CD4-positive, alpha-beta T cell (primary cell): ENCODE measurements at regions of chr16 and their contacts with region 1.

Region 1: GRCh38 chr16:4506450-4506849 is 30.3 kb downstream of the HMOX2 start:
- DNase-seq: peak; percentile 37 to 87 (median 48)
- ATAC-seq: peak; percentile 30
- H3K4me3 ChIP-seq: no peak overlapping the region
- H3K4me3 Mint-ChIP-seq: peak overlapping the region; percentile 82
- H3K27ac ChIP-seq: peak overlapping the region; percentile 78 to 84
- H3K27ac Mint-ChIP-seq: peak overlapping the region; percentile 97
- H3K4me1 ChIP-seq: peaks cover 72% of the 10 kb centered on the region
- H3K4me1 Mint-ChIP-seq: peaks cover 65% of the 10 kb centered on the region
- H3K27me3 ChIP-seq: no peaks in the 10 kb centered on the region
- H3K27me3 Mint-ChIP-seq: no peaks in the 10 kb centered on the region
- CTCF ChIP-seq: peak; percentile 86

Region 2: GRCh38 chr16:4200000-4200780 is 306.3 kb before region 1 on chr16:
- CTCF ChIA-PET with region 1: no interaction called
- POLR2A ChIA-PET with region 1: no interaction called
- intact Hi-C with region 1: no loop called
- DNase-seq: peak in 11 of 14 experiments; percentile 5 to 57 (median 26)
- ATAC-seq: peak; percentile 56
- H3K4me3 ChIP-seq: no peak overlapping the region
- H3K4me3 Mint-ChIP-seq: no peak overlapping the region
- H3K27ac ChIP-seq: no peak overlapping the region
- H3K27ac Mint-ChIP-seq: no peak overlapping the region
- H3K4me1 ChIP-seq: peaks cover 7% of the 10 kb centered on the region
- H3K4me1 Mint-ChIP-seq: no peaks in the 10 kb centered on the region
- H3K27me3 ChIP-seq: peaks cover 0 to 7% of the 10 kb centered on the region in 2 experiments
- H3K27me3 Mint-ChIP-seq: peaks cover 9% of the 10 kb centered on the region
- CTCF ChIP-seq: no peak

Region 3: GRCh38 chr16:4443271-4443670 is 63.2 kb before region 1 on chr16:
- CTCF ChIA-PET with region 1: no interaction called
- POLR2A ChIA-PET with region 1: no interaction called
- intact Hi-C with region 1: no loop called
- DNase-seq: no peak
- ATAC-seq: no peak
- H3K4me3 ChIP-seq: no peak overlapping the region
- H3K4me3 Mint-ChIP-seq: no peak overlapping the region
- H3K27ac ChIP-seq: no peak overlapping the region
- H3K27ac Mint-ChIP-seq: no peak overlapping the region
- H3K4me1 ChIP-seq: no peaks in the 10 kb centered on the region
- H3K4me1 Mint-ChIP-seq: no peaks in the 10 kb centered on the region
- H3K27me3 ChIP-seq: no peaks in the 10 kb centered on the region
- H3K27me3 Mint-ChIP-seq: no peaks in the 10 kb centered on the region
- CTCF ChIP-seq: no peak

Region 4: DNA sequence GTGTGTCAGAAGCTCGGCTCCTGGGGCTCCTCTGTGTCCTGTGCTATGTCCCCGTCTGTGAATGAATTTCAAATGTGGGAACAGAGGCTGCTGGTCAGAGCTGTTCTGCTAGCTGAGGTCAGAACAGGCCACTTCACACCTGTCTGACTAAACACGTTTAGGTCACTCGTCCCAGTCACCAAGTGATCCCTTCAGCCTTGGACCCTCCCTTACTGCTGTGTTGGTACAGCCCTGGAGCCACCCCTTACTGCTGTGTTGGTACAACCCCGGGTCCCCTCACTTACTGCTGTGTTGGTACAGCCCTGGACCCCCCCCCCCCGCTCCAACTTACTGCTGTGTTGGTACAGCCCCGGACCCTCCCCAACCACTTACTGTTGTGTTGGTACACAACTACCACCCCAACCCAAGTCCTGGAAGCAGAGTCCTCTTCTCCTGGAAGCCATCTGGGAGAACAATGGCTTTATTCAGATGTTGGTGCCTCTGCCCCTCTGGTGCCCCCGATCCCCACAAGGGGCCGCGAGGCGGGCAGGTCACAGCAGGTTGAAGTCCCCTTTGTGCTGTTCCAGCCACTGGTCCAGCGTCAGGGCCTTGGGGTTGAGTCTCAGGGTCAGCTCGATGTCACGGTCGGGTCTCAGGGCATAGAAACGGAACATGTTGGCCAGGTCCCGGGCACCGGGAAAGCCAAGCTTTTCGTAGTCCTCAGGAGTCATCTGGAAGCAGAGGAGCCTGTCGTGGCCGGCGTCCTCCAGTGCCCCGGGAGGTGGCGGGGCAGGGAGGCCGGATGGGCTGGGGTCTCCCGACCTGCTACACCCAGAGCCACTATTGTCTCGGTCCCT is 45.0 kb before region 1 on chr16:
- CTCF ChIA-PET with region 1: interaction called, 3 read pairs
- POLR2A ChIA-PET with region 1: interaction called, 11 read pairs
- intact Hi-C with region 1: no loop called
- DNase-seq: no peak
- ATAC-seq: no peak
- H3K4me3 ChIP-seq: no peak overlapping the region
- H3K4me3 Mint-ChIP-seq: no peak overlapping the region
- H3K27ac ChIP-seq: no peak overlapping the region
- H3K27ac Mint-ChIP-seq: peak overlapping the region; percentile 51
- H3K4me1 ChIP-seq: peaks cover 32% of the 10 kb centered on the region
- H3K4me1 Mint-ChIP-seq: peaks cover 20% of the 10 kb centered on the region
- H3K27me3 ChIP-seq: no peaks in the 10 kb centered on the region
- H3K27me3 Mint-ChIP-seq: no peaks in the 10 kb centered on the region
- CTCF ChIP-seq: no peak

Region 5: GRCh38 chr16:4487955-4488498 is 18.4 kb before region 1 on chr16:
- CTCF ChIA-PET with region 1: interaction called, 5 read pairs
- POLR2A ChIA-PET with region 1: interaction called, 86 read pairs
- intact Hi-C with region 1: loop called (anchors 1 to 2 kb)
- DNase-seq: peak in 2 of 14 experiments; percentile 54 to 56
- ATAC-seq: peak; percentile 45
- H3K4me3 ChIP-seq: peak overlapping the region; percentile 7
- H3K4me3 Mint-ChIP-seq: peak overlapping the region; percentile 73
- H3K27ac ChIP-seq: peak overlapping the region; percentile 37 to 73
- H3K27ac Mint-ChIP-seq: peak overlapping the region; percentile 91
- H3K4me1 ChIP-seq: peaks cover 71% of the 10 kb centered on the region
- H3K4me1 Mint-ChIP-seq: peaks cover 60% of the 10 kb centered on the region
- H3K27me3 ChIP-seq: no peaks in the 10 kb centered on the region
- H3K27me3 Mint-ChIP-seq: no peaks in the 10 kb centered on the region
- CTCF ChIP-seq: no peak

Region 6: GRCh38 chr16:4538350-4539235 is 32.1 kb after region 1 on chr16 and contains the start of gene CDIP1:
- CTCF ChIA-PET with region 1: interaction called, 4 read pairs
- POLR2A ChIA-PET with region 1: interaction called, 45 read pairs
- intact Hi-C with region 1: no loop called
- DNase-seq: peak; percentile 89 to 98 (median 94)
- ATAC-seq: peak; percentile 77
- H3K4me3 ChIP-seq: peak within 1 kb of the TSS; percentile 68
- H3K4me3 Mint-ChIP-seq: peak within 1 kb of the TSS; percentile 91
- H3K27ac ChIP-seq: peak within 1 kb of the TSS; percentile 87 to 89
- H3K27ac Mint-ChIP-seq: peak within 1 kb of the TSS; percentile 89
- H3K4me1 ChIP-seq: peaks cover 47% of the 10 kb centered on the region
- H3K4me1 Mint-ChIP-seq: peaks cover 40% of the 10 kb centered on the region
- H3K27me3 ChIP-seq: no peaks in the 10 kb centered on the region
- H3K27me3 Mint-ChIP-seq: no peaks in the 10 kb centered on the region
- CTCF ChIP-seq: no peak
- total RNA-seq, gene CDIP1: 19.5 to 22.4 TPM

Region 7: DNA sequence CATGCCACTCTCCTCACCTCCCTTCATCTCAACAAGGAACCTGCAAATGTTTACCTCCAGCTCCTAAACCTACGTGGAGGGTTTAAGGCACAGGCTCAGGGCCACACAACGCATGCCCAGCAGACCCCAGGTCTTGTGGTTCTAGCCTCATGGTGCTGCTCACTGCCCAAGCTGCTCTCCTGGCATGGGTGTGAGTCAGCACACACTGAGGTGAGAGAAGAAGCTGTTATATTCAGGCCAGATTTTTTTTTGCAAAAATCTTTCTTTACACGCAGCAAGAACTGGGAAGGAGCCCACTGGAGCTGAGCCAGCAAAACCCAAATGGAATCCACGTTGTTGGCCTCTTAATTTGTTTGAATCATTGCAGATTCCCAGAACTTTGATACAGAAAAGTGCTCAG is 44.1 kb after region 1 on chr16:
- CTCF ChIA-PET with region 1: interaction called, 59 read pairs
- POLR2A ChIA-PET with region 1: interaction called, 9 read pairs
- intact Hi-C with region 1: loop called (anchors 1 kb)
- DNase-seq: no peak
- ATAC-seq: no peak
- H3K4me3 ChIP-seq: no peak overlapping the region
- H3K4me3 Mint-ChIP-seq: no peak overlapping the region
- H3K27ac ChIP-seq: no peak overlapping the region
- H3K27ac Mint-ChIP-seq: no peak overlapping the region
- H3K4me1 ChIP-seq: peaks cover 10% of the 10 kb centered on the region
- H3K4me1 Mint-ChIP-seq: peaks cover 5% of the 10 kb centered on the region
- H3K27me3 ChIP-seq: no peaks in the 10 kb centered on the region
- H3K27me3 Mint-ChIP-seq: no peaks in the 10 kb centered on the region
- CTCF ChIP-seq: no peak

Region 8: GRCh38 chr16:4580245-4580644 is 73.8 kb after region 1 on chr16:
- CTCF ChIA-PET with region 1: interaction called, 9 read pairs
- POLR2A ChIA-PET with region 1: interaction called, 7 read pairs
- intact Hi-C with region 1: loop called (anchors 1 to 2 kb)
- DNase-seq: no peak
- ATAC-seq: no peak
- H3K4me3 ChIP-seq: no peak overlapping the region
- H3K4me3 Mint-ChIP-seq: no peak overlapping the region
- H3K27ac ChIP-seq: no peak overlapping the region
- H3K27ac Mint-ChIP-seq: no peak overlapping the region
- H3K4me1 ChIP-seq: peaks cover 1% of the 10 kb centered on the region
- H3K4me1 Mint-ChIP-seq: no peaks in the 10 kb centered on the region
- H3K27me3 ChIP-seq: no peaks in the 10 kb centered on the region
- H3K27me3 Mint-ChIP-seq: no peaks in the 10 kb centered on the region
- CTCF ChIP-seq: no peak